Activated naive CD4-positive, alpha-beta T cell treated with anti-CD3 and anti-CD28 coated beads for 36 hours (primary cell): ENCODE measurements at regions of chr2 and their contacts with region 1.

Region 1: DNA sequence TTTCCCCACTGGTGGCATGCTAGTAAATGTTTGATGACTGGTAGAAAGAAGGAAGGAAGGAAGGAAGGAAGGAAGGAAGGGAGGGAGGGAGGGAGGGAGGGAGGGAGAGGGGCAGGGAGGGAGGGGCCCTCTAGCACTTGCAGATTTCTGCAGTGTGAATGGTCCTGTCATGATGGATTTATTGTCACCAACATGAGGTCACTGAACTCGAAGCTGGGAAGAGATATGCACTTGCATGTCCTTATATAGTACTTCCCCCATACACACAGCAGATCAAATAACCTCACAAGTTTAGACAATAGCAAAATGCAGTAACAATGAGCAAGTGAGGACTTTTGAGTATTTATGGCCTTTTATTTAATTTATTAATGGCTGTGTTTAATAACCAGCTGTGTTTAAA is 44.5 kb upstream of the CXCR4 start:
- DNase-seq: no peak
- H3K4me3 Mint-ChIP-seq: no peak overlapping the region
- H3K27ac Mint-ChIP-seq: no peak overlapping the region
- H3K4me1 Mint-ChIP-seq: peaks cover 14% of the 10 kb centered on the region
- H3K27me3 Mint-ChIP-seq: no peaks in the 10 kb centered on the region

Region 2: GRCh38 chr2:136141510-136142149 is 20.8 kb before region 1 on chr2:
- CTCF ChIA-PET with region 1: interaction called, 3 read pairs
- intact Hi-C with region 1: loop called (anchors 2 kb)
- DNase-seq: no peak
- H3K4me3 Mint-ChIP-seq: no peak overlapping the region
- H3K27ac Mint-ChIP-seq: no peak overlapping the region
- H3K4me1 Mint-ChIP-seq: peaks cover 59% of the 10 kb centered on the region
- H3K27me3 Mint-ChIP-seq: peaks cover 14% of the 10 kb centered on the region

Region 3: GRCh38 chr2:136217996-136218395 is 55.6 kb after region 1 on chr2:
- CTCF ChIA-PET with region 1: no interaction called
- intact Hi-C with region 1: no loop called
- DNase-seq: no peak
- H3K4me3 Mint-ChIP-seq: no peak overlapping the region
- H3K27ac Mint-ChIP-seq: no peak overlapping the region
- H3K4me1 Mint-ChIP-seq: peaks cover 11% of the 10 kb centered on the region
- H3K27me3 Mint-ChIP-seq: no peaks in the 10 kb centered on the region

Region 4: GRCh38 chr2:136362676-136363390 is 200.4 kb after region 1 on chr2:
- CTCF ChIA-PET with region 1: no interaction called
- intact Hi-C with region 1: no loop called
- DNase-seq: peak; percentile 68
- H3K4me3 Mint-ChIP-seq: no peak overlapping the region
- H3K27ac Mint-ChIP-seq: peak overlapping the region; percentile 42
- H3K4me1 Mint-ChIP-seq: peaks cover 51% of the 10 kb centered on the region
- H3K27me3 Mint-ChIP-seq: peaks cover 4% of the 10 kb centered on the region